SK-N-SH (cell line): ENCODE measurements at regions of chr1 and their contacts with region 1.

Region 1: DNA sequence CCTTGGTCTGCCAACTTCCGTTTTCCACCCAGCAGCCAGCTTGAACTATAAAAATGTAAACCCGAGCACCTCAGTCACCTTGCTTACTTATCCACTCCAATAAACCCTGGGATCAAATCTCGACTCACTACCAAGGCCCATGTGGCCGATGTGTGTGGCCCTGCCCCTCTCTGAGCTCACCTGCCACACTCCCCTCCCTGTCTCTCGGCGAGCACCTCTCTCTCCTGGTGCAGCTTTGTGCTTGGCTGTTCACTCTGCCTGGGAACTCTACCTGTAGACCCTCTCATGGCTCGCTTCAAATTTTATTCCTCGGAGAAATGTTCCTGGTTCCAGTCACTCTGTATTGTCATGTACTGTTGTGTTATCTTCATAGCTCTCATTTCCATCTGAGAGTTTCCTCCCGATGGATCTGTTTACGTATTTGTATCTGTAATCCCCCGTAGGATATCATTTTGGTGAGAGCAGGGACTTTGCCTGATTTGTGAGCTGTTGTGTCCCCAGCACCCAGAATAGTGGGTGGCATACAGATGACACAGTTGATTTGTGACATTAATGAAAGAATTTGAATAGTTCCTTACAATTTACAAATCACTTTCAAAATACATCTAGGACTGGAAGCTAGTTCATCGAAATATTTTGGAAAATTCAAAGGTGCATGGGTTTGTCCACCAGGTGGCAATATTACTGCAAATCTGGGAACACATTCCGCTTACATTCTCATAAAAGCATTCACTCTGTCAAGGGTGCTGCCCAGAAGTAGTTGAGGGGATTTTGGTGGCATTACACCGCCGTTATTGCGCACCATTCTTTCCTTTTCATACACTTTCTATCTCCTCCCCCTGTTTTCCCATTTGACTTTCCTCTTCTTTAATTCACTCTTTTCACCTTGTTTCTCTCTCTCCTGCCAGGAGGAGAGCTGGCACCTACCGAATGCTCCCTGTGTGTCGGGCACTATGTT is 95.3 kb downstream of the ABCA4 start:
- DNase-seq: peak; percentile 74
- H3K4me3 ChIP-seq: no peak overlapping the region; a peak in 1 of 4 replicates
- H3K27ac ChIP-seq: no peak overlapping the region
- H3K4me1 ChIP-seq: peaks cover 0 to 8% of the 10 kb centered on the region in 2 experiments; a peak in 1 of 4 replicates
- H3K27me3 ChIP-seq: no peaks in the 10 kb centered on the region
- CTCF ChIP-seq: peak; percentile 85
- EP300 ChIP-seq: no peak
- RAD21 ChIP-seq: peak; percentile 86

Region 2: GRCh38 chr1:94012686-94013624 is 12.7 kb before region 1 on chr1:
- CTCF ChIA-PET with region 1: interaction called, 82 read pairs
- POLR2A ChIA-PET with region 1: no interaction called
- DNase-seq: no peak
- H3K4me3 ChIP-seq: no peak overlapping the region
- H3K27ac ChIP-seq: no peak overlapping the region
- H3K4me1 ChIP-seq: peaks cover 0 to 9% of the 10 kb centered on the region in 2 experiments; a peak in 1 of 4 replicates
- H3K27me3 ChIP-seq: no peaks in the 10 kb centered on the region
- CTCF ChIP-seq: no peak
- EP300 ChIP-seq: no peak
- RAD21 ChIP-seq: no peak

Region 3: DNA sequence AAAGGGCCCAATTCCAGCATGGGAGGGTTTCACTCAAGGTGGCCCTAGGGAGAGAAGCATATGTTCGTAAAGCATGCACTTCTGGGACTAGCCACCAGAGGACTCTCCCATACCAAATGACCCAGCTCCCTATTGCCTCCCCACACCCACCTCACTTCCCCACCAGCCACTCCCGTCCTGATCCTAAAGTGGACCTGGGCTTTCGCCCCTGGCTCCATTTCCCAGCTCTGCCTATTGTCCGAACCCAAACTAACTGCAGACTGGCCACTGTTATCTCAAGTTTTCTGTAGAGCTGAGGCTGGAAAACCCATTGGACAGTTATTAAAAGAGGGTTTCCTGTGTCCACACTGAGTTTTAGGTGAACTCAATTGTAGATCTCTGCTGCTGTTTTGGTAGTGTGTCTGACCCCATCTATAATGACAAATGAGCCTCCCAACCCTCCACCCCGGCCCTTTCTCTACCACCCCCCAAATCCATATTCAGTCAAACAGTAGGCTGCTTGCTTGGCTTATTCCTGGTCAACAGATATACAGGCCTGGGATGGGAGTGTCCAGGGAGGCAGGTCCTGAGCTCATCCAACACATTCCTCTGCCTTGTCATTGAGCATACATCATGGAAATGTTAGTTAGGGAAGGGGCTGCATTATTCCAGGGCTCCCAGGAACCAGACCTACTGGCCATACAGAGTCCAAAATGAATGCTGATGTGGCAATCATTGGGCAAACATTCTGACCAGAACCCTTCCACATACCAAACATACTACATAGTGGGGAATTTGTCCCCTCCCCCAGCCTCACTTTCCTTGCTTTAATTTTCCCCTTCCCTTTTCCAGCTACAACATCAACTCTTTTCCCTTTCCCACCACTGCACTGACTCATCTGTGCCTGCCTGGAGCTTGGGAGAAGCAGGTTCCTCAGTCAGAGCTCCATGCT is 36.1 kb after region 1 on chr1:
- CTCF ChIA-PET with region 1: interaction called, 87 read pairs
- POLR2A ChIA-PET with region 1: no interaction called
- DNase-seq: peak; percentile 79
- H3K4me3 ChIP-seq: no peak overlapping the region; a peak in 1 of 4 replicates
- H3K27ac ChIP-seq: no peak overlapping the region
- H3K4me1 ChIP-seq: peaks cover 0 to 10% of the 10 kb centered on the region in 2 experiments; a peak in 2 of 4 replicates
- H3K27me3 ChIP-seq: no peaks in the 10 kb centered on the region
- CTCF ChIP-seq: peak; percentile 82
- EP300 ChIP-seq: no peak
- RAD21 ChIP-seq: peak; percentile 94

Region 4: GRCh38 chr1:94237291-94238226 is 211.9 kb after region 1 on chr1 and contains the start of gene ARHGAP29:
- CTCF ChIA-PET with region 1: interaction called, 32 read pairs
- POLR2A ChIA-PET with region 1: no interaction called
- DNase-seq: peak; percentile 96
- H3K4me3 ChIP-seq: peak within 1 kb of the TSS; percentile 89 to 93
- H3K27ac ChIP-seq: peak within 1 kb of the TSS; percentile 31 to 76
- H3K4me1 ChIP-seq: peaks cover 6 to 12% of the 10 kb centered on the region in 2 experiments; a peak in 2 of 4 replicates
- H3K27me3 ChIP-seq: no peaks in the 10 kb centered on the region
- CTCF ChIP-seq: no peak; the same call in 1 of the 2 replicates
- EP300 ChIP-seq: no peak
- RAD21 ChIP-seq: peak; percentile 31
- polyA plus RNA-seq, gene ARHGAP29: 20.1 and 23.3 TPM in 2 replicates